ENCODE measurements at regions of chr19 and their contacts with region 1.

Region 1: DNA sequence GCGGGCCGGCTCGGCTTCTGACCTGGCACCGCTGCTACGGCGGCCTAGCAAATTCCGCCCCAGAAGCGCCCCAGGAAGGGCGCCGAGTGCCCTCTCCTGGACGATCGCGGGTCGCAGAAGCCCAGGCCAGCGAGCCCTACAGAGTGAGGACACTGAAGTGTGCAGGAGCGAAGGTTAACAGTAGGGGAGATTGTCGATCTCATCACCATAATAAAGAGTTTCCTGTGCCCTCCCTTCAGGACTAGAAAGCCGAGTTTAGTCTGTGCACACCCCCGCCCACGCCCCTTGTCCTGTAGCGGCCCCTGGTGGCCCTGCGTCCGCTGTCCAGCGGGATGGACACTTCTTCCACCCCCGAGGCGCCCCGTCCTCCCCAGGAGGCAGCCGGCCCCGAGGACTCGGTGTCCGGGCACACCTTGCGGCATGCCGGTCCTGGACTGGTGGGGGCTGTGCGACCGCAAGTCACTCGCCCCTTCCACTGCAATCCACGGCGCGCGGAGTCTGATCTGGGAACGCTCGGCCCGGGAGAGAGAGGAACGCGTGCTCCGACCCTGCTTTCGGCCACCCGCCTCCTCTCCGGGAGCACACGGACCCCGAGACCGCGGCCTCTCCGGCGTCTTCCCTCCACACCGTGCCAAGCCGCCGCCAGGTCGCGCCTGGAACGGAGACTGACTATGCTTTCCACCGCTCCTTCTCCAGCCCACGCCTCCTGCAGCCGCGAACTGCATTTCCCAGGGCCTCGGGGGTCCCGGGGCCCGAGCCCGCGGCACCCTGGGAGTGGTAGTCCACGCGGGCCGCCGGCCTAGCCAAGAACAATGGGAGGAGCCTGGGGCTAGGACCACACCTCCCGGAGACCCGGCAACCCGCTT is 769 bp upstream of the KMT2B start:
- DNase-seq: peak; percentile 97
- H3K4me3 ChIP-seq: peak overlapping the region; percentile 76 to 98 (median 88)
- H3K27ac ChIP-seq: peak overlapping the region; percentile 83 to 94 (median 90)
- H3K4me1 ChIP-seq: peaks cover 24 to 46% (median 38%) of the 10 kb centered on the region in 4 donors
- H3K27me3 ChIP-seq: no peaks in the 10 kb centered on the region
- CTCF ChIP-seq: peak; percentile 86 to 94 (median 90)
- EP300 ChIP-seq: no peak
- POLR2A ChIP-seq: no peak

Region 2: GRCh38 chr19:35693830-35694599 is 23.0 kb before region 1 on chr19:
- intact Hi-C with region 1: loop called (anchors 1 kb)
- DNase-seq: peak; percentile 95
- H3K4me3 ChIP-seq: no peak overlapping the region
- H3K27ac ChIP-seq: no peak overlapping the region
- H3K4me1 ChIP-seq: no peaks in the 10 kb centered on the region
- H3K27me3 ChIP-seq: peaks cover 0 to 3% (median 0%) of the 10 kb centered on the region in 4 donors
- CTCF ChIP-seq: peak; percentile 94 to 99 (median 99)
- EP300 ChIP-seq: no peak
- POLR2A ChIP-seq: no peak

Region 3: DNA sequence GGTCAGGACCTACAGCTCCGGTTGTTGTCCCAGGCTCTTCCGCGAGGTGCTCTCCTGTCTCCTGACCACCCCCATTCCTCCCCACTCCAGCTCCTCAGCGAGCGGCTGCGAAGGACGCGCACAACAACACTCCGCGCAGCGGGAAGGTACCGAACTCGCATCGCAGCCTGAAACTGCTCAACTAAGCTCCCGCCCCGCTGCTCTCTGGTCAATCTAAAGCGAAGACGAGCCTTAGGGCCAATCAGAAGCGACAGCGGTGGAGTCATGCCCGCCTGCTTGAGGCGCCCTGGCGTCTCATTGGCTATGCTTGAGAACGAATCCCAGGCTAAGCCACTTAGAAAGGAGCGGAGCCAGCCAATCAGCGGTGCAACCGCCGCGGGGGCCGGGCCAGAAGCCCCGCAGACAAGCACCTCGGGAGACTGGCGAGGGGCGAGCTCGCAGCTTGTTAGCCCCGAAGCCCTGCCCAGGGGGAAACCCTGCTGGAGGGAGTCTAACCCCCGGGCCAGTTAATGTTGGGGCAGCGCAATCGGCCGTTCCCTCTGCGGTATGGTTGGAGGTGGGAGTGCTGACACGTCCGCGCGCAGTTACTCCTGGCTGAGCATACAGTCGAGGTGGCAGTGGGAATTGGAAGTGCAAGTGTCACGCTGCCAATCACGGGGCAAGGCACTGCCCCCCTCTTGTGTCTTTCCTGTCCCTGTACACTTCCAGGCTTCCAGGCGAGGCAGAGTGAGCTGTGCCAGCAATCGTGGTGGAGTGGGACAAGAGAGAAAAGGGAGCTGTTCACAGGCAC is 14.6 kb before region 1 on chr19:
- intact Hi-C with region 1: loop called (anchors 2 kb)
- DNase-seq: peak; percentile 99
- H3K4me3 ChIP-seq: peak overlapping the region; percentile 62 to 91 (median 66)
- H3K27ac ChIP-seq: peak overlapping the region; percentile 29 to 62 (median 42)
- H3K4me1 ChIP-seq: peaks cover 11 to 16% (median 15%) of the 10 kb centered on the region in 4 donors
- H3K27me3 ChIP-seq: peaks cover 0 to 14% (median 0%) of the 10 kb centered on the region in 4 donors
- CTCF ChIP-seq: peak in 1 of 3 experiments; percentile 11
- EP300 ChIP-seq: no peak
- POLR2A ChIP-seq: no peak

Region 4: GRCh38 chr19:35767288-35768081 is 50.5 kb after region 1 on chr19:
- intact Hi-C with region 1: no loop called
- DNase-seq: no peak
- H3K4me3 ChIP-seq: no peak overlapping the region
- H3K27ac ChIP-seq: no peak overlapping the region
- H3K4me1 ChIP-seq: peaks cover 0 to 10% (median 3%) of the 10 kb centered on the region in 4 donors
- H3K27me3 ChIP-seq: no peaks in the 10 kb centered on the region
- CTCF ChIP-seq: no peak
- EP300 ChIP-seq: no peak
- POLR2A ChIP-seq: no peak